Adrenal gland (tissue), 19 donors: ENCODE measurements at regions of chr13 and their contacts with region 1.

Region 1: GRCh38 chr13:98972627-98973026 is 5.2 kb downstream of the DOCK9 start:
- DNase-seq: no peak
- H3K4me3 ChIP-seq: no peak overlapping the region
- H3K27ac ChIP-seq: no peak overlapping the region
- H3K4me1 ChIP-seq: peaks cover 6 to 15% of the 10 kb centered on the region in 2 donors
- H3K27me3 ChIP-seq: no peaks in the 10 kb centered on the region
- CTCF ChIP-seq: no peak
- POLR2A ChIP-seq: no peak

Region 2: GRCh38 chr13:98189841-98190505 is 782.7 kb before region 1 on chr13:
- intact Hi-C with region 1: no loop called
- DNase-seq: peak in 5 of 7 donors; percentile 52 to 78 (median 69)
- H3K4me3 ChIP-seq: no peak overlapping the region
- H3K27ac ChIP-seq: peak overlapping the region in 2 of 5 donors; percentile 2 to 35
- H3K4me1 ChIP-seq: peaks cover 27 to 42% of the 10 kb centered on the region in 2 donors
- H3K27me3 ChIP-seq: no peaks in the 10 kb centered on the region
- CTCF ChIP-seq: peak in 2 of 6 experiments; percentile 22
- POLR2A ChIP-seq: no peak

Region 3: DNA sequence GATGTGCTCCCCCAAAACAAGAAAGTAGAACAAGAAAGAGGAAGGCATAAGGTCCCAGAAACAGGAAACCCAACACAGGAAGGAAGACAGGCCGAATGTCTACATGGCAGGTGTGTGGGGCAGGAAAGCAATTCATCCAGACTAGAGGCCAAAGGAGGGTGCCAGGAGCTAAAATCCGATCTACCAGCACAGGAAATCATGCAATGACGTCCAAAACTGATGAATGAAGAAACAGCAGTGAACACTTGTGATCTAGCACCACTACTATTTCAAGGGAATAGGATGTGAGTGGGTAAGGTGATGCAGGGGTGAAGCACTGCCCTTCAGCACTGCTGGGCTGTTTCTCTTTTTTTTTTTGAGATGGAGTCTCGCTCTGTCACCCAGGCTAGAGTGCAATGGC is 53.9 kb before region 1 on chr13:
- intact Hi-C with region 1: loop called in 1 of 2 experiments (anchors 5 kb)
- DNase-seq: no peak
- H3K4me3 ChIP-seq: no peak overlapping the region
- H3K27ac ChIP-seq: no peak overlapping the region
- H3K4me1 ChIP-seq: peaks cover 17 to 33% of the 10 kb centered on the region in 2 donors
- H3K27me3 ChIP-seq: no peaks in the 10 kb centered on the region
- CTCF ChIP-seq: no peak
- POLR2A ChIP-seq: no peak